Activated CD8-positive, alpha-beta T cell treated with anti-CD3 and anti-CD28 coated beads for 36 hours (primary cell): ENCODE measurements at regions of chr14 and their contacts with region 1.

Region 1: DNA sequence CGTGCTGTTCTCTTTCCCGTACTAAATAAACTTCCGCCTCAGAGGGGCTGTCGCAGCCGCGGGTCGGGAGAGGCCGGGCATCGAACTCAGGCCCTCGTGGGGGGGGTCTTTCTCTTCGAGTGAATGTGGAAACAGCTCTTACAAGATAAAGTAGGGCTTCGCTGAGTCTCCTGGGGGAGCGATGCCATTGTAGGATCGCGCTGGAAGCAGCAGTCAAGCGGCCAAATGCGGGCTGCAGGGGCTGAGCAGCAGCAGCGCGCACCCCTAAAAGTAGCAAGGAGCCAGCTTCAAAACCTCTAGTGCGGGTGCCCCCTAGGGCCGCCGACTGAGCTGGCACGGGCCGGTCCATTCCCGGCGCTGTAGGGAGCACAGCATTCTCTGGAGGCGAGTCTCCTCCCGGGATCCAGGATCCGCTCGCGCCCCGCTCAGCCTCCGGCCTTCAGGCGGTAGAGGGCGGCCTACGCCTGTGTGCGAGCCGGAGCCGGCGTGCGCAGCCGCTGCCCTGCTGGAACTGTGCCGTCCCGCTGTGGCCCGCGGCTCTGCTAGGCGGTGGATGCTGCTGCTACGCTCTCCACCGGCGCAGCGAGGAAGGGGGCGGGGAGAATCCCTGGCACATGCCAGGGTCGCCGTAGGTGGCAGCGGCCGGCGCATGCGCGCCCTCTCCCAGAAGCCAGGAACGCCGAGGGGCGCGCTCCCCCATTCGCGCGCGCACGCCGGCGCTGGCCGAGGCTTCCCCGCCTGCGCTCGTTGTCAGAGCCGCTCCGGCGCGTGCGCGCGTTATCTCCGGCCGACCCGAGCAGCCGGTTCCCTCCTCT is at the start of gene FUT8:
- DNase-seq: peak; percentile 97
- ATAC-seq: peak; percentile 91
- H3K4me3 Mint-ChIP-seq: peak within 1 kb of the TSS; percentile 95
- H3K27ac Mint-ChIP-seq: peak within 1 kb of the TSS; percentile 98
- H3K4me1 Mint-ChIP-seq: peaks cover 46% of the 10 kb centered on the region
- H3K27me3 Mint-ChIP-seq: no peaks in the 10 kb centered on the region
- CTCF ChIP-seq: peak; percentile 66
- total RNA-seq, gene FUT8: 55.7 to 61.0 TPM

Region 2: DNA sequence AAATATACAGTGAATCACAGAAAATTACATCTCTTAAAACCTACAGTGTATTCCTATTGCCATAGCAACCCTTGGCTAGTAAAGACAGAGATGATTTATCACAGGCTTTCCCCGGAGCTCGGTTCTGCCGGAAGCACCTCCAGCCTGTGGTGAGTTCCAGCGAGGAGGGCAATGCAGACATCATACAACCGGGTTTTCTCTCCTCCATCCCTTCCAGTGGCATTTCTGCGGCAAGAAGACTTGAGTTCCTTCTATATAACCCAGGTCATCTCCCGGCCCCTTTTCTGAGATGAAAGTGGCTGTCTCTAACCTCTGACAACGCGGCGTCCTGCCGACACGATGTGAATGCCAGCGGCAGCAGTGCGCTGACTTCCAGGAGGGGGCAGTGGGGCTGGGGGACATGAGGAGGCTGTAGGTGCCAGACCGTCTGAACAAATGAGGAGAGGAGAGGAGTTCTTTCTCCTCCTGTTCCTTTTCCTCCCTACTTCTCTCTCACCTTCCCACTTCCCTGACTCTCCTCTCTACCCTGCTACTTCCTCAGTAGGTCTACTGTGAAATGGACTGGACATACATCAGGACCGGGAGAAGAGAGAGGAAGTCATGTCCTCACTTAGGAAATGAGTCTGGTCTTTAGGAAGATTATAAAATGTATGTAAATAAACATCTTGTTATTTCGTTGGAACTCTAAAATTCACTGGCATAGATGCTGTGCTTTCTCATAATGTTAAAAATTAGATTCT is 241.3 kb before region 1 on chr14:
- CTCF ChIA-PET with region 1: interaction called, 47 read pairs
- POLR2A ChIA-PET with region 1: interaction called, 4 read pairs
- intact Hi-C with region 1: loop called (anchors 5 kb)
- DNase-seq: peak; percentile 72
- ATAC-seq: peak; percentile 80
- H3K4me3 Mint-ChIP-seq: peak overlapping the region; percentile 67
- H3K27ac Mint-ChIP-seq: peak overlapping the region; percentile 53
- H3K4me1 Mint-ChIP-seq: peaks cover 19% of the 10 kb centered on the region
- H3K27me3 Mint-ChIP-seq: peaks cover 14% of the 10 kb centered on the region
- CTCF ChIP-seq: peak; percentile 28

Region 3: DNA sequence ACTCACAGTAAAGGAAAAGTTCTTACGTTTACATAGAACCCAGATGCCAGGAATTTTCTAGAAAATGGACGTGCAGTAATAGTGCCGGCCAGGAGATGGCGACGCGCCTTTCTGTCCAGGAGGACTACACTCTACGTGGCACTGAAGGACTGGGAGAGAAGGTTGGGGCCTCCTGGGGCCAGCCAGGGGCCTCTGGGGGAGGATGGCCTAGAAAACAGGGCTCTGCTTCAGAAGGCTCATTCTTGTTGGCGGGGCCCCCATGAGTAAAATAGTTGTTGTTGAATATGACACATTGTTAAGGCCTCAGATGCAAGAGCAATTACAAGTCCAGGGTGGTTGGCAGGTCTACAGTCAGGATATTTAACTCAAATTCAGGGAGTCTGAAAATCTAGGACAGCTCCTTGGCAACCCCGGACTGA is 189.8 kb before region 1 on chr14:
- CTCF ChIA-PET with region 1: interaction called, 44 read pairs
- POLR2A ChIA-PET with region 1: no interaction called
- intact Hi-C with region 1: loop called (anchors 5 kb)
- DNase-seq: peak; percentile 74
- ATAC-seq: peak; percentile 96
- H3K4me3 Mint-ChIP-seq: no peak overlapping the region
- H3K27ac Mint-ChIP-seq: peak overlapping the region; percentile 69
- H3K4me1 Mint-ChIP-seq: peaks cover 22% of the 10 kb centered on the region
- H3K27me3 Mint-ChIP-seq: no peaks in the 10 kb centered on the region
- CTCF ChIP-seq: peak; percentile 95

Region 4: GRCh38 chr14:65302571-65303189 is 109.6 kb before region 1 on chr14:
- CTCF ChIA-PET with region 1: interaction called, 8 read pairs
- POLR2A ChIA-PET with region 1: interaction called, 7 read pairs
- intact Hi-C with region 1: loop called (anchors 5 kb)
- DNase-seq: peak; percentile 92
- ATAC-seq: peak; percentile 80
- H3K4me3 Mint-ChIP-seq: peak overlapping the region; percentile 61
- H3K27ac Mint-ChIP-seq: peak overlapping the region; percentile 80
- H3K4me1 Mint-ChIP-seq: peaks cover 71% of the 10 kb centered on the region
- H3K27me3 Mint-ChIP-seq: no peaks in the 10 kb centered on the region
- CTCF ChIP-seq: no peak

Region 5: DNA sequence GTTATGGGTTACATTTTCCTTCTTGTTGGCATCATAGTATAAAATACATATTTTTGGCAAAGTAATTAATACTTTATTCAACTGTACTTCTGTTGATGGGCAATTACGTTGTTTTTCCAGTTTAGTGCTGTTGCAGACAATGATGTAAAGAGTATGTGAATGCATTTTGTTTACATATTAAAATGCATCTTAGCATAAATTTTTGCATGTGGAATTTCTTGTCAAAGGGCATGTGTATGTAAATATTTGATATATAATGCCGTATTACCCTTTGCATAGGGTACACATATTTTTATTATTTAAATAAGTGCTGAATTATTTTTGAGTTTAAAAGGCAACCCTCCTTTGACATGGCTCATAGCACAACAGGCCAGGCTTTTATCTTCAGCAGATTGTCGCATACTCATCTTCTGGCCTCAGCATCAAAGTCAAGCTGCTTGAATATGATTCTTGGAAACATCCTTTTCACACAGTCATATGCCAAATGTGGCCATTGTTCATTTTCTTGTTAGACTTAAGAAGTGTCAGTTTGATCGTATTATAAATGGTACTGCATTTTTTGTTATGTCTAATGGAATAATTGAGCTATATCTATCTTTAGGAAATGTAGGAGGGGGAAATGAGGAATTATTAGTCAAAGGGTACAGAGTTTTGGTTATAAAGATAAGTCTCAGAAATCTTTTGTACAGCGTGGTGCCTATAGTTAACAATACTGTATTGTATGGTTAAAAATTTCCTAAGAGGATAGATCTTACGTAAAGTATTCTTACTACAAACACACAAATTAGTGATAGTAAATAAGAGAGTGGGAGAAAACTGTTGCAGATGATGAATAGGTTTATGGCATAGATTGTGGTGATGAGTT is 138.8 kb after region 1 on chr14:
- CTCF ChIA-PET with region 1: no interaction called
- POLR2A ChIA-PET with region 1: no interaction called
- intact Hi-C with region 1: no loop called
- DNase-seq: peak; percentile 24
- ATAC-seq: peak; percentile 83
- H3K4me3 Mint-ChIP-seq: peak overlapping the region; percentile 36
- H3K27ac Mint-ChIP-seq: peak overlapping the region; percentile 86
- H3K4me1 Mint-ChIP-seq: peaks cover 34% of the 10 kb centered on the region
- H3K27me3 Mint-ChIP-seq: no peaks in the 10 kb centered on the region
- CTCF ChIP-seq: no peak

Region 6: GRCh38 chr14:65604936-65605335 is 192.7 kb after region 1 on chr14:
- CTCF ChIA-PET with region 1: no interaction called
- POLR2A ChIA-PET with region 1: no interaction called
- intact Hi-C with region 1: no loop called
- DNase-seq: no peak
- ATAC-seq: no peak
- H3K4me3 Mint-ChIP-seq: no peak overlapping the region
- H3K27ac Mint-ChIP-seq: no peak overlapping the region
- H3K4me1 Mint-ChIP-seq: peaks cover 6% of the 10 kb centered on the region
- H3K27me3 Mint-ChIP-seq: no peaks in the 10 kb centered on the region
- CTCF ChIP-seq: no peak

Region 7: GRCh38 chr14:65824285-65824977 is 412.2 kb after region 1 on chr14:
- CTCF ChIA-PET with region 1: interaction called, 74 read pairs
- POLR2A ChIA-PET with region 1: no interaction called
- intact Hi-C with region 1: loop called (anchors 5 kb)
- DNase-seq: peak; percentile 68
- ATAC-seq: peak; percentile 98
- H3K4me3 Mint-ChIP-seq: no peak overlapping the region
- H3K27ac Mint-ChIP-seq: no peak overlapping the region
- H3K4me1 Mint-ChIP-seq: peaks cover 7% of the 10 kb centered on the region
- H3K27me3 Mint-ChIP-seq: no peaks in the 10 kb centered on the region
- CTCF ChIP-seq: peak; percentile 88

Region 8: GRCh38 chr14:66070509-66071319 is 658.5 kb after region 1 on chr14:
- CTCF ChIA-PET with region 1: interaction called, 11 read pairs
- POLR2A ChIA-PET with region 1: interaction called, 3 read pairs
- intact Hi-C with region 1: loop called (anchors 10 kb)
- DNase-seq: peak; percentile 79
- ATAC-seq: peak; percentile 90
- H3K4me3 Mint-ChIP-seq: no peak overlapping the region
- H3K27ac Mint-ChIP-seq: no peak overlapping the region
- H3K4me1 Mint-ChIP-seq: no peaks in the 10 kb centered on the region
- H3K27me3 Mint-ChIP-seq: no peaks in the 10 kb centered on the region
- CTCF ChIP-seq: peak; percentile 90